ENCODE measurements at regions of chr4 and their contacts with region 1.

Region 1: DNA sequence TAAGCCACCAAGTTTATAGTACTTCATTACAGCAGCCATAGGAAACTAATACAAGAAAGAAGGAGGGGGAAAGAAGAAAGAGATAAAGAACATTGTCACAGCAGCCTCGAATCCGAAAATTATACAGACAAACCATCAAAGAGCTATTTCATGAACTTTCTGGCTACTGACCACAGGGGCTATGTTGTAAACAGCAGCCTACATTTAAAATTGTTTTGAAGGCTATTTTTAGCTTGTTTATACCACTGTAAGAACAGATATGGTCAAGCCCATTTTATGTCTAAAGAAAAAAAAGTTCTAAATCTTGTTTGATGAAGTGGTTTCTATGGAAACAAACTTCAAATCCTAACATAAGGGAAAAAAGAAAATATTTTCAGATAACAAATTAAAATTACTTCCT is 282.1 kb downstream of the GABRG1 start:
- DNase-seq: no peak
- H3K4me3 ChIP-seq: no peak overlapping the region
- H3K27ac ChIP-seq: no peak overlapping the region
- H3K4me1 ChIP-seq: no peaks in the 10 kb centered on the region
- H3K27me3 ChIP-seq: no peaks in the 10 kb centered on the region
- CTCF ChIP-seq: no peak
- POLR2A ChIP-seq: no peak

Region 2: DNA sequence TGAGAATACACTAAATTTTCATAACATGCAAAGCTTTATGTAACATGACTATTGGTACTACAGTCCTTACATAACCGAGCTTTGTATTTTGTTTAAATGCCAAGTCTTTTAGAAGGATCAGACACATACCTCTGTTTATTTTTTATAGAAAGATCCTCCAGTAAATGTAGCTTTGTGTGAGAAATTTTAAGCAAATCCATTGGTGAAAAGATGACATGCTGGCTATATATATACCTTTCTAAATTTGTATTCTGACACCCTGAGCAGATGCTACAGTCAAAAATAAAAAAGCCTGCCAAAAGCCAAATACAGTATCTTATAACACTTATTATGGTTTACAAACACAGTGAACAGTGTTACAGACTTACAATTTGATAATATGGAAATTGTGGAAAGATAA is 1190.4 kb before region 1 on chr4 and contains the start of gene YIPF7:
- intact Hi-C with region 1: loop called (anchors 5 kb)
- DNase-seq: no peak
- H3K4me3 ChIP-seq: no peak within 1 kb of the TSS
- H3K27ac ChIP-seq: no peak within 1 kb of the TSS
- H3K4me1 ChIP-seq: no peaks in the 10 kb centered on the region
- H3K27me3 ChIP-seq: no peaks in the 10 kb centered on the region
- CTCF ChIP-seq: no peak
- POLR2A ChIP-seq: no peak
- total RNA-seq, gene YIPF7: not detected